ENCODE measurements at regions of chr3 and their contacts with region 1.

Region 1: GRCh38 chr3:172317984-172318383 is 130.3 kb downstream of the GHSR start:
- DNase-seq: peak; percentile 58 to 93
- H3K4me3 ChIP-seq: no peak overlapping the region
- H3K27ac ChIP-seq: peak overlapping the region; percentile 86
- H3K4me1 ChIP-seq: peaks cover 72% of the 10 kb centered on the region
- H3K27me3 ChIP-seq: no peaks in the 10 kb centered on the region
- CTCF ChIP-seq: no peak

Region 2: GRCh38 chr3:171101982-171102641 is 1215.9 kb before region 1 on chr3:
- CTCF ChIA-PET with region 1: no interaction called
- POLR2A ChIA-PET with region 1: interaction called, 27 read pairs
- intact Hi-C with region 1: no loop called
- DNase-seq: no peak
- H3K4me3 ChIP-seq: no peak overlapping the region
- H3K27ac ChIP-seq: no peak overlapping the region
- H3K4me1 ChIP-seq: no peaks in the 10 kb centered on the region
- H3K27me3 ChIP-seq: no peaks in the 10 kb centered on the region
- CTCF ChIP-seq: no peak

Region 3: DNA sequence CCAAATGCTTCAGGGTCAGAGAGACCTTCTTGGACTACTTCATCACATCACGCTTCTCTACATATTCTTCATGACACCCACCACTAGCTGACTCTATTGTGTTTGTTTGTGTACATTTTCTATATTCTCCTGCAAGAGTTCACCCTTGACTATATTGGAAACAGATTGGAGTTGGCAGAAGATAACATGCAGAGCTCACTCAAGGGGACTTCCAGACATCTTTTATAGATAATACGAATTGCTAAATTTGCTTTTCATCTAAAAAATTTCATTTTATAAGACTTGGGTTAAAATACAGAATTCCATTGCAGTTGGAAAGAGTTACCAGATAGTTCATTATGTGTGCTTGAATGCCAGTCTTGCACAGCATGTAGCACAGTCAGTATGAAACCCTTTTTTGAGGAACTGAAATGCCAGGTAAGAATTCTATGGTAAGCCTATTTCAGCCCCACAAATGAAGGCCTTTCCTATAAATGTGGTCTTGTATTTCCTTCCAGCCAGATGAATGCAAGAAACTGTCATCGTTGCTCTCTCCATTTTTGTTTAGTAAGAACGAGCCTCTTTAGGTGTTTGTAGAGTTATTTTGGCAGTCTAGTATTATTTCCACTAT is 47.3 kb before region 1 on chr3:
- CTCF ChIA-PET with region 1: no interaction called
- POLR2A ChIA-PET with region 1: no interaction called
- intact Hi-C with region 1: no loop called
- DNase-seq: no peak
- H3K4me3 ChIP-seq: no peak overlapping the region
- H3K27ac ChIP-seq: no peak overlapping the region
- H3K4me1 ChIP-seq: peaks cover 20% of the 10 kb centered on the region; the same call in 1 of the 2 replicates
- H3K27me3 ChIP-seq: no peaks in the 10 kb centered on the region
- CTCF ChIP-seq: no peak

Region 4: GRCh38 chr3:172305552-172305951 is 12.4 kb before region 1 on chr3:
- CTCF ChIA-PET with region 1: no interaction called
- POLR2A ChIA-PET with region 1: interaction called, 4 read pairs
- intact Hi-C with region 1: loop called (anchors 1 kb)
- DNase-seq: peak in 1 of 2 experiments; percentile 87
- H3K4me3 ChIP-seq: 0 out of 2 replicates have a peak overlapping the region, but pooled peaks have one; percentile 2
- H3K27ac ChIP-seq: peak overlapping the region; percentile 78
- H3K4me1 ChIP-seq: peaks cover 46% of the 10 kb centered on the region
- H3K27me3 ChIP-seq: no peaks in the 10 kb centered on the region
- CTCF ChIP-seq: no peak

Measured in PC-9 (cell line).